ENCODE measurements at regions of chr6 and their contacts with region 1.

Region 1: DNA sequence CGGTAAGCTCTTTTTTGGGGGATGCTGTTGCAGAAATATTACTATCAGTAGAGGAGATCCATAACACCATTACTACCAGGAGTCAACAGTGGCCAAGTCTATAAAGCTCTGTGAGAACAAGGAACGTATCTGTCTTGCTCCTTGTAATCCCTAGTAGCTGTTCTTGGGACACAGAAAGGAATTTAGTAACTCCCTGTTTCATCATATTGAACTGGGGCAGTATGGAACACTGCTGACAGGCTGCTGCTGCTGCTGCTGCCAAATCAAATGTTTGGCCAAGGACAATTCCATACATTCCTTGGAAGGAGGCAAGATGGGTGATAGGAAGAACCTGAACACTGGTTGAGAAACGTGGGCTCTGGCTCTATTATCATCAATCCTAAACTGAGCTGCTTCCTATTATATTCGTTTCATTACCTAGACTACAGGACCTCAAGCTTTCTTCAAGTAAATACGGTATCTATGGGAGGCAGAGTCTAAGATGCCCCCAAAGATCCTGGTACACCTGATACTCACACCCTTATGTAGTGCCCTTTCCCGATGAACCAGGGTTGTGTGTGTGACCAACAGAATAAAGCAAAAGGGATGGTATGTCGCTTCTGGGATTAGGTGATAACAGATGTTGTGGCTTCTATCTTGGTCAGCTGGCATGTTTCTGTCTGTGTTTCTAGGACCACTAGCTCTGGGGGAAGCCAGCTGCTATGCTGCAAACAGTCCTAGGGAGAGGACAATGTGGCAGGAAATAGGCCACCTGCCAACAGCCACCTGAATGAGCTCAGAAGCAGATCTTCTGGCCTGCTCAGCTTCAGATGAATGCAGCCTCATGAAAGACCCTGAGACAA is 39.5 kb downstream of the ELOVL5 start:
- DNase-seq: peak in 6 of 9 experiments; percentile 26 to 62 (median 34)
- ATAC-seq: peak; percentile 53
- H3K4me3 ChIP-seq: no peak overlapping the region
- H3K4me3 Mint-ChIP-seq: no peak overlapping the region
- H3K27ac ChIP-seq: peak overlapping the region in 1 of 2 experiments; percentile 38
- H3K27ac Mint-ChIP-seq: peak overlapping the region; percentile 45
- H3K4me1 ChIP-seq: peaks cover 53% of the 10 kb centered on the region
- H3K4me1 Mint-ChIP-seq: peaks cover 81% of the 10 kb centered on the region
- H3K27me3 ChIP-seq: no peaks in the 10 kb centered on the region
- H3K27me3 Mint-ChIP-seq: no peaks in the 10 kb centered on the region
- CTCF ChIP-seq: no peak

Region 2: GRCh38 chr6:53322188-53323029 is 13.1 kb after region 1 on chr6:
- CTCF ChIA-PET with region 1: no interaction called
- POLR2A ChIA-PET with region 1: interaction called, 9 read pairs
- intact Hi-C with region 1: loop called in 1 of 2 experiments (anchors 2 kb)
- DNase-seq: no peak
- ATAC-seq: no peak
- H3K4me3 ChIP-seq: no peak overlapping the region
- H3K4me3 Mint-ChIP-seq: no peak overlapping the region
- H3K27ac ChIP-seq: no peak overlapping the region
- H3K27ac Mint-ChIP-seq: peak overlapping the region; percentile 3
- H3K4me1 ChIP-seq: peaks cover 5% of the 10 kb centered on the region
- H3K4me1 Mint-ChIP-seq: peaks cover 62% of the 10 kb centered on the region
- H3K27me3 ChIP-seq: no peaks in the 10 kb centered on the region
- H3K27me3 Mint-ChIP-seq: no peaks in the 10 kb centered on the region
- CTCF ChIP-seq: no peak